CD4-positive, alpha-beta memory T cell (primary cell): ENCODE measurements at regions of chr3 and their contacts with region 1.

Region 1: GRCh38 chr3:42502429-42503250 is at the start of gene VIPR1:
- DNase-seq: peak; percentile 93 to 95 (median 94)
- H3K4me3 ChIP-seq: peak within 1 kb of the TSS; percentile 70 to 88
- H3K4me3 Mint-ChIP-seq: peak within 1 kb of the TSS; percentile 95 to 99 (median 96)
- H3K27ac ChIP-seq: peak within 1 kb of the TSS; percentile 64
- H3K27ac Mint-ChIP-seq: peak within 1 kb of the TSS; percentile 83 to 97 (median 95)
- H3K4me1 ChIP-seq: peaks cover 51% of the 10 kb centered on the region
- H3K4me1 Mint-ChIP-seq: peaks cover 27 to 61% (median 44%) of the 10 kb centered on the region in 4 donors
- H3K27me3 ChIP-seq: peaks cover 9% of the 10 kb centered on the region
- H3K27me3 Mint-ChIP-seq: peaks cover 7 to 10% of the 10 kb centered on the region in 2 donors
- total RNA-seq, gene VIPR1: 93.6 to 104 TPM

Region 2: DNA sequence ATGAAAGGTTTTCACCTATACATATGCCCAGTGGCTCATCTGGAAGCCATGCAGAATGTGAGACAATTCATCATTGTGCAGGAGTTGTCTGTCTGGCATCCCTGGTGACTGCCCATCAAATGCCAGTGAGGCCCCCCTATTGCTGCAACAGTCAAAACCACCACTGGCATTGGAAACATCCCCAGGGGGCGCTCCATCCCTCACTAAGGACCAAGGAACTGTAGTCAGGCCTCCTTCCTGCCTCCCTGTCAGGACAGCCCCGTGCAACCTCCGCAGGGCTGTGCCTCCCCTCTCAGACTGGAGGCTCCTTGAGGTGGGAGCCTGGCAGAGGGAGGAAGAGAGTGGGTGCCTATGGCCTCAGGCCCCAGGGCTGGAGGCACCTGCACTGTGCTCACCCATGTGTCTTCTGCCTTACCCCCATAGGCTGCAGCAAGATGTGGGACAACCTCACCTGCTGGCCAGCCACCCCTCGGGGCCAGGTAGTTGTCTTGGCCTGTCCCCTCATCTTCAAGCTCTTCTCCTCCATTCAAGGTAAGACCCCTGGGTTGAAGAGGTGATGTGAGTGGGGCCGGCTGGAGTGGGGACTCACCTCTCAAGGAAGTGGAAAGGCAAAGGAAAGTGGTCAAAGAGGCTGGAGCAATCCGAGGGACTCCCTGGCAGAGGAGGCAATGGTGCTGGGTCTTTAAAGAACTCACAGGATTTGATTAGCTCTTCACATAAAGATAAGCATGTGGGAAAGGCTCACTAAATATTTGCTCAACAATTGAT is 16.3 kb after region 1 on chr3:
- CTCF ChIA-PET with region 1: interaction called, 1,823 read pairs
- POLR2A ChIA-PET with region 1: interaction called, 25 read pairs
- intact Hi-C with region 1: no loop called
- DNase-seq: peak in 4 of 5 donors; percentile 52 to 60 (median 58)
- H3K4me3 ChIP-seq: no peak overlapping the region
- H3K4me3 Mint-ChIP-seq: peak overlapping the region in 7 of 8 donors; percentile 68 to 88 (median 79)
- H3K27ac ChIP-seq: peak overlapping the region; percentile 36
- H3K27ac Mint-ChIP-seq: peak overlapping the region; percentile 76 to 94 (median 93)
- H3K4me1 ChIP-seq: peaks cover 33% of the 10 kb centered on the region
- H3K4me1 Mint-ChIP-seq: peaks cover 24 to 61% (median 44%) of the 10 kb centered on the region in 4 donors
- H3K27me3 ChIP-seq: no peaks in the 10 kb centered on the region
- H3K27me3 Mint-ChIP-seq: no peaks in the 10 kb centered on the region

Region 3: GRCh38 chr3:42539869-42540714 is 37.5 kb after region 1 on chr3:
- CTCF ChIA-PET with region 1: interaction called, 1,823 read pairs
- POLR2A ChIA-PET with region 1: interaction called, 75 read pairs
- intact Hi-C with region 1: loop called (anchors 1 kb)
- DNase-seq: peak; percentile 47 to 64 (median 60)
- H3K4me3 ChIP-seq: no peak overlapping the region
- H3K4me3 Mint-ChIP-seq: no peak overlapping the region
- H3K27ac ChIP-seq: no peak overlapping the region
- H3K27ac Mint-ChIP-seq: peak overlapping the region in 5 of 7 donors; percentile 17 to 72 (median 52)
- H3K4me1 ChIP-seq: peaks cover 18% of the 10 kb centered on the region
- H3K4me1 Mint-ChIP-seq: peaks cover 13 to 32% (median 25%) of the 10 kb centered on the region in 4 donors
- H3K27me3 ChIP-seq: no peaks in the 10 kb centered on the region
- H3K27me3 Mint-ChIP-seq: no peaks in the 10 kb centered on the region

Region 4: DNA sequence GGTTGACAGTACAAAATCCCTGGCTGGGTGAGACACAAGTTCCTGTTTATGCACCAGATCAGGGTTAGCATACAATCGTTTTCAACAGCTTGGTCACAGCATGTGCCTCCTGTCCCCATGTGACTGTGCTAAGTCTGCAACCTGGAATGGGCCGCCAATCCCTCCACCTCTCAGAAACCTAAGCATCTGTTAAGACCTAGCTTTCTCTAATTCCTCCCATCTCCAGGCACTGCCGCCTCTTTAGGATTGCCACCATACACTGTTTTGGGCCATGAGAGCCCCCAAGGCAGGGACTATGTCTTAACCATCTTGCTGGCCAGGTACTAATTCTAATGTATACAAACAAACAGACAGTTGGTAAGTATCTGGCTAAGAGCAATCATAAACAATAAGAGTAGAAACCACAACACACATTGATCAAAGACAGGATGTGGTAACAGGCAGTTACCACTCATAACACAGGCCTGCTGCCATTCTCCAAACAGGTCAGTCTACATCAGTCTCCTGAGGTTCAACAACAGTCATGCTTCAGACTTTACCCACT is 53.5 kb after region 1 on chr3:
- CTCF ChIA-PET with region 1: interaction called, 1,823 read pairs
- POLR2A ChIA-PET with region 1: interaction called, 27 read pairs
- intact Hi-C with region 1: loop called (anchors 1 kb)
- DNase-seq: peak; percentile 78 to 86 (median 81)
- H3K4me3 ChIP-seq: peak overlapping the region; percentile 15 to 17
- H3K4me3 Mint-ChIP-seq: peak overlapping the region; percentile 46 to 88 (median 80)
- H3K27ac ChIP-seq: peak overlapping the region; percentile 41
- H3K27ac Mint-ChIP-seq: peak overlapping the region; percentile 91 to 99 (median 98)
- H3K4me1 ChIP-seq: peaks cover 44% of the 10 kb centered on the region
- H3K4me1 Mint-ChIP-seq: peaks cover 31 to 52% (median 43%) of the 10 kb centered on the region in 4 donors
- H3K27me3 ChIP-seq: no peaks in the 10 kb centered on the region
- H3K27me3 Mint-ChIP-seq: no peaks in the 10 kb centered on the region

Region 5: DNA sequence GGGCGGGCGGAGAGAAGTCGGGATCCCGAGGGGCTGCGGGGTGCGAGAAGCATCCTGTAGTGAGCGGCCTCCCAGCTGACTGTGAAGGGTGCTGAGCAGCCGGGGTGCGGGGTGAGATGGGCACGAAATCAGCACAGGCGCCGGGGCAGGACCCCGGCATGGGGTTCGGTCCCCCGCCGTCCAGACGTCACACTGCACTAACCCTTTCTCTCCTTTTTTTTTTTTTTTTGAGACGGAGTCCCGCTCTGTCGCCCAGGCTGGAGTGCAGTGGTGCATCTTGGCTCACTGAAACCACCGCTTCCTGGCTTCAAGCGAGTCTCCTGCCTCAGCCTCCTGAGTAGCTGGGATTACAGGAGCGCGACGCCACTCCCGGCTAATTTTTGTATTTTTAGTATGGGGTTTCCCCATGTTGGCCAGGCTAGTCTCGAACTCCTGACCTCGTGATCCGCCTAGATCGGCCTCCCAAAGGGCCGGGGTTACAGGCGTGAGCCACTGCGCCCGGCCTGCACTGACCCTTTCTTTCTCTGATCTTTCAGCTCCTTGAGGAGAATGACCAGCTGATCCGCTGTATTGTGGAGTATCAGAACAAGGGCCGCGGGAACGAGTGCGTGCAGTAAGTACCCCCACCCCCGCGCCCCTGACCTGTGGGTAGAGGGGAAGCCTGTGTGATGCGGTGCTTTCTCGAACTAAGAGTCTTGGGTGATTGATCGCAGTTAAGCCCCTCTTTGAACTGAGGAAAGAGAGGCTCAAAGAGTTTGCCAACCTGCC is 88.5 kb after region 1 on chr3:
- CTCF ChIA-PET with region 1: interaction called, 4 read pairs
- POLR2A ChIA-PET with region 1: interaction called, 12 read pairs
- intact Hi-C with region 1: no loop called
- DNase-seq: no peak
- H3K4me3 ChIP-seq: peak overlapping the region; percentile 54 to 70
- H3K4me3 Mint-ChIP-seq: peak overlapping the region; percentile 96 to 100 (median 98)
- H3K27ac ChIP-seq: peak overlapping the region; percentile 74
- H3K27ac Mint-ChIP-seq: peak overlapping the region; percentile 95 to 100 (median 99)
- H3K4me1 ChIP-seq: peaks cover 34% of the 10 kb centered on the region
- H3K4me1 Mint-ChIP-seq: peaks cover 18 to 42% (median 31%) of the 10 kb centered on the region in 4 donors
- H3K27me3 ChIP-seq: no peaks in the 10 kb centered on the region
- H3K27me3 Mint-ChIP-seq: no peaks in the 10 kb centered on the region

Region 6: DNA sequence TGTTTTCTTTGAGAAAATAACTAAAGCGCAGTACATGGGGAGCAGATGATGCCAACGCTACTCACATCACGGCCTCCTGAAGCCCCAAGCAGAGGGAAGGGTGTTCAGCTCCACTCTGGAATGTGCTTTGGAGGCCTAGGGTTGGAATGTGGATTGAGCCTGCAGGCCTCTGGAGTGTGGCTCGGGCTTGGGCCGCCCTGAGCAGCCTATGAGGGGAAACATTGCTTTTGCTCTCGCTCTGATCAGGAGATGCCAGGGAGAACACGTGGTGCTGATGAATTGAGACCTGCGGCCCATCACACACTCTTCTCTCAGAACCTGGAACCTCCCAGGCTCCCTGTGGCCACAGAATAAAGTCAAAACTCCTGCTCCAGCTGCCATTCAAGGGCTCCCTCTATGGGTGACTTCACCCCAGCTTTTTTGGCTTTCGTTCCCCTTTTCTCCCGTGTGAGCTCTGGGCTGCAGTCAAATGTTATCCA is 247.2 kb after region 1 on chr3:
- CTCF ChIA-PET with region 1: interaction called, 7 read pairs
- POLR2A ChIA-PET with region 1: interaction called, 9 read pairs
- intact Hi-C with region 1: loop called (anchors 1 kb)
- DNase-seq: no peak
- H3K4me3 ChIP-seq: no peak overlapping the region
- H3K4me3 Mint-ChIP-seq: no peak overlapping the region
- H3K27ac ChIP-seq: no peak overlapping the region
- H3K27ac Mint-ChIP-seq: peak overlapping the region in 2 of 7 donors; percentile 53 to 65
- H3K4me1 ChIP-seq: peaks cover 24% of the 10 kb centered on the region
- H3K4me1 Mint-ChIP-seq: peaks cover 20 to 42% (median 31%) of the 10 kb centered on the region in 4 donors
- H3K27me3 ChIP-seq: no peaks in the 10 kb centered on the region
- H3K27me3 Mint-ChIP-seq: no peaks in the 10 kb centered on the region

Region 7: GRCh38 chr3:42880601-42881451 is 378.2 kb after region 1 on chr3:
- CTCF ChIA-PET with region 1: no interaction called
- POLR2A ChIA-PET with region 1: no interaction called
- intact Hi-C with region 1: loop called (anchors 1 kb)
- DNase-seq: peak; percentile 83 to 86 (median 85)
- H3K4me3 ChIP-seq: peak overlapping the region in 1 of 2 donors; percentile 74
- H3K4me3 Mint-ChIP-seq: peak overlapping the region; percentile 77 to 89 (median 82)
- H3K27ac ChIP-seq: peak overlapping the region; percentile 56
- H3K27ac Mint-ChIP-seq: peak overlapping the region; percentile 26 to 87 (median 71)
- H3K4me1 ChIP-seq: peaks cover 11% of the 10 kb centered on the region
- H3K4me1 Mint-ChIP-seq: peaks cover 9 to 15% (median 12%) of the 10 kb centered on the region in 4 donors
- H3K27me3 ChIP-seq: no peaks in the 10 kb centered on the region
- H3K27me3 Mint-ChIP-seq: peaks cover 1 to 3% of the 10 kb centered on the region in 2 donors